IMR-90 (cell line): ENCODE measurements at regions of chr2 and their contacts with region 1.

Region 1: DNA sequence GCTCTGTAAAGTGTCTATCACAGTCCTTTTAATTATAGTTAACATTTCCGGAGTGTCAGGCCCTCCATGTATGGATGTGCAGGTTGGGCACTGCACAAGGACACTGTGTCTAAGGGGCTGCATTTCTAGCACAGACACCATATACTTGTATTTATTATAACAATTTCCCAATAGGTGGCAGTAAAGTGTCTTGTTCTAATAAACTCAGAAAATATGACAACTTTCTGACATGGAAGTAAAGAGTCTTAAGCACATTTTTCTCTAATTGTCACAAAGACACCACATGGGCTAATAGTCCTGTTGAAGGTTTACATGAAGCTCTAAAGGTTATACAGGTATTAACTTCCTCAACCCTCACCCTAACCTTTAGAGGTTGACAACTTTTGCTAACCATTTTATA is 156.6 kb downstream of the DYSF start:
- DNase-seq: peak; percentile 54
- ATAC-seq: peak; percentile 81
- H3K4me3 ChIP-seq: no peak overlapping the region
- H3K27ac ChIP-seq: no peak overlapping the region
- H3K4me1 ChIP-seq: no peaks in the 10 kb centered on the region
- H3K27me3 ChIP-seq: peaks cover 42% of the 10 kb centered on the region
- CTCF ChIP-seq: peak; percentile 49
- POLR2A ChIP-seq: no peak
- RAD21 ChIP-seq: peak; percentile 43

Region 2: DNA sequence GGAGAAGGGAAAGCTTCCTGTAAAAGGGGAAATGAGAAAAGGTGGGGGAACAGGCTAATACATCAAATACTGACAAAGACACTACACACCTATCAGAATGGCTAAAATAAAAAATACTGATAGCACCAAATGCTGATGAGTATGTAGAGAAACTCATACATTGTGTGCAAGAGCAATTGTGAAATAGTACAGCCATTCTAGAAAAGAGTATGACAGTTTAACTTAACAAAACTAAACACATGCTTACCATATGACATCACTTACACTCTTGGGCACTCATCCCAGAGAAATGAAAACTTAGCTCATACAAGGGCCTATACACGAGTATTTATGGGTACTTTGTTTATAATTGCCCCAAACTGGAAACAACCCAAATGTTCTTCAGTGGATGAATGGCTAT is 224.9 kb before region 1 on chr2:
- CTCF ChIA-PET with region 1: no interaction called
- POLR2A ChIA-PET with region 1: no interaction called
- dilution Hi-C with region 1: no loop called
- in situ Hi-C with region 1: no loop called
- intact Hi-C with region 1: no loop called
- DNase-seq: peak; percentile 92
- ATAC-seq: peak; percentile 86
- H3K4me3 ChIP-seq: no peak overlapping the region
- H3K27ac ChIP-seq: no peak overlapping the region
- H3K4me1 ChIP-seq: 0 out of 2 replicates have a peak, but pooled peaks cover 2% of the 10 kb centered on the region
- H3K27me3 ChIP-seq: no peaks in the 10 kb centered on the region
- CTCF ChIP-seq: no peak
- POLR2A ChIP-seq: no peak
- RAD21 ChIP-seq: no peak

Region 3: GRCh38 chr2:71659868-71660518 is 50.0 kb after region 1 on chr2:
- CTCF ChIA-PET with region 1: no interaction called
- POLR2A ChIA-PET with region 1: no interaction called
- dilution Hi-C with region 1: no loop called
- in situ Hi-C with region 1: no loop called
- intact Hi-C with region 1: no loop called
- DNase-seq: no peak
- ATAC-seq: no peak
- H3K4me3 ChIP-seq: no peak overlapping the region
- H3K27ac ChIP-seq: no peak overlapping the region
- H3K4me1 ChIP-seq: no peaks in the 10 kb centered on the region
- H3K27me3 ChIP-seq: 0 out of 2 replicates have a peak, but pooled peaks cover 1% of the 10 kb centered on the region
- CTCF ChIP-seq: no peak
- POLR2A ChIP-seq: no peak
- RAD21 ChIP-seq: no peak

Region 4: DNA sequence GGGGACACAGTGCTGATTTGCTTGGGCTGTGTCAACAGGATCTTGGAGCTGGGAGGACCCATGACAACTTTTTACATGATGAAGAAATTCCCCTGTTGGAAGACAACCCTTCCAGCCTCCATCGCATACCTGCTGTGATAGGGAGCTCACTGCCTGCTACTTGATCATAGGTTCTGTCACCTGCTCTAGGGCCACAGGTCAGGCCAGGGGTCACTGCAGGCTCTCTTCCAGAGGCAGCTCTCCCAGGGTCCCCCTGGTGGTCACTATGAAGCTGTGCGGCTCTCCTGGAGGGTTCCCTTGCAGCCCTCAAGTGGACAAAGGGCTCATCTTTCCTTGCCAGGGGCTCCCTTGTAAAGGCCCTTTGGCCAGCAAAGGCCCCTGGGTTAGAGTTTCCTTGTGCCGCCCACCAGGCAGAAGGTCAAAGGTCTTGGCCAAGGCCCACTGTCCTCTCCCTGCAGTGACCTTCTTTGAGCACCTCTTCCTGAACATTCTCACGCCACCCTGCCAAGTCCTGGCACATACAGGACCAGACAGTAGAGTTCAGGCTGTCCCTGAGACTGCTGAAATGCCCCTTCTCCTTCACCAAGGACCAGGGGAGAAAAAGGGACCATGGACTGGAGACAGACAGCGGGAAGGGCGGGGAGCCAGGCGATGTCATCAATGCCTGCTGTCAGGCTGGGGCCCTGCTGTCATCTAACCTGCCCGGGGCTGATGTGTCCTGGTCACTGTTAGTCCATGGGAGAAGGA is 188.5 kb after region 1 on chr2:
- CTCF ChIA-PET with region 1: interaction called, 30 read pairs
- POLR2A ChIA-PET with region 1: no interaction called
- dilution Hi-C with region 1: no loop called
- in situ Hi-C with region 1: no loop called
- intact Hi-C with region 1: loop called (anchors 1 kb)
- DNase-seq: peak; percentile 10
- ATAC-seq: peak; percentile 62; the same call in 1 of the 2 replicates
- H3K4me3 ChIP-seq: no peak overlapping the region
- H3K27ac ChIP-seq: no peak overlapping the region
- H3K4me1 ChIP-seq: peaks cover 12% of the 10 kb centered on the region
- H3K27me3 ChIP-seq: peaks cover 10% of the 10 kb centered on the region
- CTCF ChIP-seq: peak; percentile 61
- POLR2A ChIP-seq: no peak
- RAD21 ChIP-seq: peak; percentile 47

Region 5: GRCh38 chr2:71933467-71934319 is 323.7 kb after region 1 on chr2:
- CTCF ChIA-PET with region 1: no interaction called
- POLR2A ChIA-PET with region 1: no interaction called
- dilution Hi-C with region 1: no loop called
- in situ Hi-C with region 1: no loop called
- intact Hi-C with region 1: loop called (anchors 10 kb)
- DNase-seq: no peak
- ATAC-seq: no peak
- H3K4me3 ChIP-seq: no peak overlapping the region
- H3K27ac ChIP-seq: no peak overlapping the region
- H3K4me1 ChIP-seq: no peaks in the 10 kb centered on the region
- H3K27me3 ChIP-seq: peaks cover 21% of the 10 kb centered on the region
- CTCF ChIP-seq: 0 out of 2 replicates have a peak, but pooled peaks have one; percentile 9
- POLR2A ChIP-seq: no peak
- RAD21 ChIP-seq: no peak

Region 6: DNA sequence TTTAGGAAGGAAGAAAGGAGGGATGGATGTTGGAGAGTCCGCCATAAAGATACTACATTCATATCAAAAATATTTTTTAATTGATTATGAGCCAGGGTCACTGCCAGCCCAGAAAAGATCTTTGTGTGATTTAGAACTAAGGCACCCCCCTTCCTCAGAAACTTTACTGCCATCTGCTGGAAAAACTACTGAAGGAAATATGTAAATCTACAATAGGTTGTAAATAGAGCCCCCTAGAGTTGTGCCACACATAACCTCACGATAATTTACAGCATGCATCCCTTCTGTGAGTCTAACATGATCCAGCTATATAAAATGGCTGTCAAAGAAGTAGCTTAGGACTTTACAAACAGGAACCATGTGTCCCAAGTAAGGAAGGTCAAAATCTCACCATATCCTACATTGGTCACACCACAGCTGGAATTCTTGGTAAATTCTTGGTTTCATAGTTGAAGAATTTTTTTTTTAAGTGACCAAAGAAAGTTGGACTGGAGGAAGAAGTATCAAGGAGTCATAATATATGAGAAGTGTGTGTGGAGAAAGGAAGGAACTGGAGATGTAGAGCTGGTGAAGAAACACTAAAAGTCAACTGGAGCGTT is 385.2 kb after region 1 on chr2:
- CTCF ChIA-PET with region 1: interaction called, 4 read pairs
- POLR2A ChIA-PET with region 1: no interaction called
- dilution Hi-C with region 1: no loop called
- in situ Hi-C with region 1: no loop called
- intact Hi-C with region 1: loop called (anchors 1 kb)
- DNase-seq: peak; percentile 5
- ATAC-seq: no peak
- H3K4me3 ChIP-seq: no peak overlapping the region
- H3K27ac ChIP-seq: no peak overlapping the region
- H3K4me1 ChIP-seq: no peaks in the 10 kb centered on the region
- H3K27me3 ChIP-seq: peaks cover 2% of the 10 kb centered on the region
- CTCF ChIP-seq: peak; percentile 45
- POLR2A ChIP-seq: no peak
- RAD21 ChIP-seq: 0 out of 2 replicates have a peak, but pooled peaks have one; percentile 4

Region 7: GRCh38 chr2:72137498-72138010 is 527.6 kb after region 1 on chr2:
- CTCF ChIA-PET with region 1: no interaction called
- POLR2A ChIA-PET with region 1: no interaction called
- dilution Hi-C with region 1: no loop called
- in situ Hi-C with region 1: no loop called
- intact Hi-C with region 1: loop called (anchors 5 kb)
- DNase-seq: peak; percentile 18
- ATAC-seq: peak; percentile 95
- H3K4me3 ChIP-seq: no peak overlapping the region
- H3K27ac ChIP-seq: no peak overlapping the region
- H3K4me1 ChIP-seq: no peaks in the 10 kb centered on the region
- H3K27me3 ChIP-seq: peaks cover 29% of the 10 kb centered on the region
- CTCF ChIP-seq: peak; percentile 86
- POLR2A ChIP-seq: no peak
- RAD21 ChIP-seq: peak; percentile 57

Region 8: GRCh38 chr2:72940786-72941185 is 1330.8 kb after region 1 on chr2:
- CTCF ChIA-PET with region 1: no interaction called
- POLR2A ChIA-PET with region 1: no interaction called
- dilution Hi-C with region 1: no loop called
- in situ Hi-C with region 1: no loop called
- intact Hi-C with region 1: no loop called
- DNase-seq: peak; percentile 81
- ATAC-seq: peak; percentile 90
- H3K4me3 ChIP-seq: no peak overlapping the region
- H3K27ac ChIP-seq: no peak overlapping the region
- H3K4me1 ChIP-seq: peaks cover 10% of the 10 kb centered on the region; the same call in 1 of the 2 replicates
- H3K27me3 ChIP-seq: peaks cover 4% of the 10 kb centered on the region; the same call in 1 of the 2 replicates
- CTCF ChIP-seq: no peak
- POLR2A ChIP-seq: no peak
- RAD21 ChIP-seq: no peak